Common myeloid progenitor, CD34-positive (primary cell): ENCODE measurements at regions of chr2 and their contacts with region 1.

Region 1: DNA sequence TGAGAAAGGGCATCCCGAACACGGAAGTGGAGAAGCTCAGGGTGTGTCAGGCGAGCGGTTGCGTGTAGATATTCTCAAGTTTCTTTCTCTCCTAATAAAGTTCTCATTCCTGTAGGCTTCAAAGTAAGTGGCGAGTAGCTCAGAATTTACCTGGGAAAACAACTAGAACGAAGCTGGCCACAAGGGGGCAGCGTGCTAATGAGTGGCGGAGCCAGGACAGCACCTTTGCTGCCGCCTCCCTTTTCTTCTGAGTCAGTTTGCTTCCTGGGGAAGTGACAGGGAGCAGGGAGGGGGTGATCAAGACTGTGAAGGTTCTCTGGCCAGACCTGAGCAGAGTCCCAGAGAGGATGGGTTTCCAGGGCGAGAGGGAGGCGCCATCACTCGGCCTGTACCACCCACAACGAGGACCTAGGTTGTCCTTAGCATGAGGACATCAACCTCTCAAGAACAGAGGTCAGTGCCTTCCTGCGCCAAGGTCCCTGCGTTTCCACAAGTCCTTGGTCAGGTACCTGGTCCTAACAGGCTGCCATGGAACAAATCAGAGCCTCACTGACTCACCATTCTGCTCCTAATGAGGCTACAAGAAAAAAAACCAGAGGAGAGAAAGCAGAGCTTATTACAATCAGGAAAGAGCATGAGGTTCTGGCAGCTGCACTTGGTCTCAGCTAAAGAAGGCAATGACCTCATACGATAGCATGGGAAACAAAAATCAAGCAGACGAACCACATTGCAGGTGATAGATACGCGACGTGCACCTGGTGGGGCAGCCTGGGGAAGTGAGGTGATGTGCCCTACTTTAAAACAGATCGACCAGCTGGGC is 98.6 kb downstream of the PLB1 start:
- DNase-seq: peak; percentile 89 to 91 (median 90)
- H3K4me3 ChIP-seq: peak overlapping the region in 3 of 7 experiments; percentile 19 to 29 (median 25)
- H3K27ac ChIP-seq: no peak overlapping the region
- H3K4me1 ChIP-seq: peaks cover 0 to 9% (median 8%) of the 10 kb centered on the region in 4 experiments
- H3K27me3 ChIP-seq: no peaks in the 10 kb centered on the region

Region 2: GRCh38 chr2:28566521-28567041 is 27.9 kb before region 1 on chr2:
- CTCF ChIA-PET with region 1: interaction called, 11 read pairs
- POLR2A ChIA-PET with region 1: no interaction called
- DNase-seq: peak; percentile 88 to 93 (median 92)
- H3K4me3 ChIP-seq: peak overlapping the region; percentile 48 to 90 (median 79)
- H3K27ac ChIP-seq: peak overlapping the region; percentile 46 to 78
- H3K4me1 ChIP-seq: peaks cover 0 to 9% (median 7%) of the 10 kb centered on the region in 4 experiments
- H3K27me3 ChIP-seq: no peaks in the 10 kb centered on the region

Region 3: DNA sequence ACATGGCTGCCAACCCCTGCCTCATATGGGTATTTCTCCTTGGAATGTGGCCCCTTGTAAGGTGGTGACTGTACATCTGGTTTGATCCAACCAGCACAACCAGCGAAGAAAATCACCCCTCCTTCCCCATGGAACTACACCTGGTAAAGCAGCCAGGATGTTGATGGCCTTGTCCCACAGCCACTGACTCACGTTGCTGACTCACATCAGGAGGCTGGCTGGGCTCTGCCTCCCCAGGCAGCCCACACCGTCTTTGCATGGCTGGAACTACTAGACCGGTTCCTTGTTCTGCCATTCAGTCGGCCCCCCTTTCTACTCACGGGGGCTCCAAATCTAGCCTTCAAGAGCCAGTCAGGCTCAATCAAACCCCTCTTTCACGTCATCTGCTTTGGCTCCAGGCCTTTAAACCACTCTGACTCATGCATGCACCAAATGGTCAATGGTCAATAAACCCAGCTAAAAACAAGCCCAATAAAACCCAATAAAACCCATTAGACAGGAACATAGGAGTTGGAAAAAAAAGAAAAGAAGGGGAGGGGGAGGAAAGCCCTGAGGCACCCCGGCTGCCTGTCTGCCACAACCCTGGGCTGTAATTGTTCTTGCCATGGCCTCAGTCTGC is 16.2 kb after region 1 on chr2:
- CTCF ChIA-PET with region 1: interaction called, 61 read pairs
- POLR2A ChIA-PET with region 1: no interaction called
- DNase-seq: peak in 2 of 3 donors; percentile 54
- H3K4me3 ChIP-seq: no peak overlapping the region
- H3K27ac ChIP-seq: no peak overlapping the region
- H3K4me1 ChIP-seq: peaks cover 0 to 20% (median 13%) of the 10 kb centered on the region in 4 experiments
- H3K27me3 ChIP-seq: no peaks in the 10 kb centered on the region

Region 4: GRCh38 chr2:28751252-28751955 is 156.9 kb after region 1 on chr2 and contains the start of gene PPP1CB:
- CTCF ChIA-PET with region 1: interaction called, 134 read pairs
- POLR2A ChIA-PET with region 1: interaction called, 9 read pairs
- DNase-seq: peak; percentile 97 to 99 (median 98)
- H3K4me3 ChIP-seq: peak within 1 kb of the TSS; percentile 94 to 100 (median 95)
- H3K27ac ChIP-seq: peak within 1 kb of the TSS; percentile 94 to 97
- H3K4me1 ChIP-seq: peaks cover 19 to 64% (median 34%) of the 10 kb centered on the region in 4 experiments
- H3K27me3 ChIP-seq: no peaks in the 10 kb centered on the region

Region 5: DNA sequence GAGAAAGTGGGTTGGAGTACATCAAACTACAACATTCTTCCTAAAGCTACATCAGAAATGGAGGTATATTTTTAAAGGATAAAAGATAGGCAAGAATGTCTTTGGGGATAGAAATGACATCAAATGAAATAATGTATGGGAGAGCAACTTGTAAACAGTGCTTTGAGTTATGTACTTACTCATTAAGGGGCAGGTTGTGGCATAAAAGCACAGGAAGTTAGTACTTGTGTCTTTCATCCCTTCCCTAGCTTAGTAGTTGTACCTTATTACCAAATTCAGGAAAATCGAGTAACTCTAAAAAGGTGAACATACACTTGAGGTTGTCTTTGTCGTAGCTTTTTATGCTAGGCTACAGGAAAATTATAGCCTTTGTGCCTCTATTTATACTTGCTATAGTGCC is 186.0 kb after region 1 on chr2:
- CTCF ChIA-PET with region 1: interaction called, 10 read pairs
- POLR2A ChIA-PET with region 1: no interaction called
- DNase-seq: no peak
- H3K4me3 ChIP-seq: no peak overlapping the region
- H3K27ac ChIP-seq: no peak overlapping the region
- H3K4me1 ChIP-seq: peaks cover 0 to 3% (median under 1%) of the 10 kb centered on the region in 4 experiments
- H3K27me3 ChIP-seq: no peaks in the 10 kb centered on the region